ENCODE measurements at regions of chr10 and their contacts with region 1.

Region 1: GRCh38 chr10:31864834-31865518 is 63.7 kb downstream of the ARHGAP12 start:
- DNase-seq: no peak
- ATAC-seq: peak in 5 of 8 donors; percentile 16 to 54 (median 51)
- H3K4me3 ChIP-seq: peak overlapping the region in 6 of 10 donors; percentile 0 to 16 (median 12)
- H3K27ac ChIP-seq: peak overlapping the region in 6 of 10 donors; percentile 10 to 27 (median 18)
- H3K4me1 ChIP-seq: peaks cover 0 to 44% (median 20%) of the 10 kb centered on the region in 9 donors
- H3K27me3 ChIP-seq: no peaks in the 10 kb centered on the region
- CTCF ChIP-seq: no peak

Region 2: DNA sequence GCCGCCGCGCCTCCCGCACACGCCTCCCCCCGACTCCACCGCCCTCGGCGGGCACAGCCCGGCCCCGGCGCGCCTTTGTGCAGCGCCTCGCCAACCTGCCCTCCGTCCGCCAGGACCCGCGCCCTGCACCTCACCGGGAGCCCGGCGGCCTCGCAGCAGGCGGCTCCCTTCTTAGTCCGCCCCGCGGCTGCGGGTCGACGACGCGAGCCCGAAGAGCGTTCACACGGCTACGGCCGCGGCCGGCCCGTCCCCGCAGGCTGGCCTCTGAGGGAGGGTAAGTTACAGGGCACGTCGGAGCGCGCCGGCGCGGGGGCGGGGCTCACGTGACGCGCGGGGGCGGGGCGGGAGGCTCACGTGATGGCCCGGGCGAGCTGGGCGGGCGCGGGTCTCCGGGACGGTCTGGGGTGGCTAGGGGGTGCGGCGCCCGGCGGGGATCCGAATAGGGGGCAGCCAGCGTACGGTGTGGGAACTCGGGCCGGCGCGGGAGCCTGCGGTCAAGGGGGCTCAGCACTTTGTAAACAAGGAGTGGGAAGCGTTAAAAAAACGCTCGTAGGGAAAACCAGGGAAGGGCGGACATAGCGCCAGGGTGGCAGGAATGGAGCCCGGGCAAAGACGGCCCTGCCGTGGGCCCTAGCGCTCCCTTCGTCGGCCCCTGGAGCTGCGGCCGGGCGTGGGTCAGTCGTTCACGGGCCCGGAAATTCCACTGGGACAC is 63.7 kb after region 1 on chr10 and contains the start of gene ARHGAP12:
- intact Hi-C with region 1: loop called in 6 of 10 experiments (anchors 5 to 10 kb)
- DNase-seq: peak; percentile 91 to 94
- ATAC-seq: peak; percentile 95 to 98 (median 97)
- H3K4me3 ChIP-seq: peak within 1 kb of the TSS; percentile 53 to 96 (median 89)
- H3K27ac ChIP-seq: peak within 1 kb of the TSS; percentile 90 to 98 (median 97)
- H3K4me1 ChIP-seq: peaks cover 6 to 42% (median 25%) of the 10 kb centered on the region in 9 donors
- H3K27me3 ChIP-seq: no peaks in the 10 kb centered on the region
- CTCF ChIP-seq: no peak
- total RNA-seq, gene ARHGAP12: 16.7 to 25.6 (median 21.0) TPM

Region 3: DNA sequence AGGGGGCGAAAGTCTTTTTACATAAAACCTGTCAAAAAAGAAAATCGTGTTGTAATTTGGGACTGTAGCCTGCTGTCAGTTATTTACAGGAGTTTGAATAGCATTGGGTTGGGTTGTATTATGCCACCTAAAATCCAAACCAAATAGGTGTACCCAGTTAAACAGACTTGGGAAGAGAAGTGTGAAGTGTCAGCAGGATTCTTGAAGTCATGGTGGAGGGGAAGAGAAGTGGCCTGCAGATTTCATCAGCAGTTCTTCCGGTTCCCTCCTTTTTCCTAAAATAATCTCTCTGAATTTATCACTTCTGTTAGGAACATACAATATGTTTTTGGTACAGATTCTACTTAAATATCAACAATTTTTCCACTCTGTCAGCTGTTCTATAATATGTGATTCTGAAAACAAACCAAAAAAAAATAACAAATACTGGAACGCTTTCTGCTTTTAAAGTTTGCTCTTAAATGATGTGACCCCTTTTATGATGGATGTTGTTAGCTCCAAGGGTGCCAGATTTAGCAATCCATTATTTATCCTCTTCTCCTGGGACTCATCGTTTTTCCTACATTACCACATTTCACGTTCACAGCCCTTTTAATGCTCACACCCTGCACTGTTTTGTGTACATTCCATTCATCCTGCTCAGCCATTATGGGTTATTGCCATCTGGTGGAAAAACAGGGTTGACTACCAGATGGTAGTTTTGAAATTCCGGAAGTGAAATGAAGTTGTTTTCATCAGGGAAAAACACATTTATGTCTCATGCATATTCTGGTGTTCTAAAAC is 82.4 kb after region 1 on chr10:
- intact Hi-C with region 1: loop called in 7 of 10 experiments (anchors 2 to 10 kb)
- DNase-seq: peak in 1 of 2 donors; percentile 22
- ATAC-seq: peak in 7 of 8 donors; percentile 58 to 91 (median 81)
- H3K4me3 ChIP-seq: peak overlapping the region in 2 of 10 donors; percentile 2 to 9
- H3K27ac ChIP-seq: peak overlapping the region in 3 of 10 donors; percentile 9 to 35 (median 34)
- H3K4me1 ChIP-seq: peaks cover 0 to 33% (median 3%) of the 10 kb centered on the region in 9 donors
- H3K27me3 ChIP-seq: no peaks in the 10 kb centered on the region
- CTCF ChIP-seq: peak in 8 of 9 donors; percentile 36 to 66 (median 50)

Region 4: DNA sequence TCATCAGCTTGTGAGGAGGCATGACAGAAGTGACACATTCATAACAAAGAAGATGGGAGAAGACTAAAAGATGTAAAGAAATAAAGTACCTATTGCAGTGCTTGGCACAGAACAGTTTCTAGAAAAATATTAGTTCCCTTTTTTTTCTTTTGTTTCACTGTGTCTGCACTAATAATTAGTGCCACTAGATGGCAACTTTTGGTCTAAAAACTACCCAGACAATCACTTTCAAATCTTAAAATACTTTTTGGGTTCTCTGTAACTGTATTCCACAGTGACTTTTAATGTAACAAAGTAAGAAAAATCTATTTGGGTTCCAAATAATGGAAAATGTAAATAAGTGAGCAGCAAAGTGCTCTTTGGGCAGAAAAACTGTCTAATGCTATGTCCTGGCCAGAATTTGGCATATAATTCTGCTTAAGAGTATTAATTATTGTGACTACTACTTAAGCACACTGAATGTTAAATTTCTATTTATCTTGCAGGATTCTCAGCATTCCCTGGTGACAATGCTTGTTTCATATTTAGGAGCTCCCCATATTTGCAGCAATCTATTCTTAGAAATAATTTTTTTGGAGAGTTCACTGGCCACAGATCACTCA is 326.0 kb after region 1 on chr10:
- intact Hi-C with region 1: loop called in 2 of 10 experiments (anchors 10 kb)
- DNase-seq: no peak
- ATAC-seq: peak in 2 of 8 donors; percentile 31 to 34
- H3K4me3 ChIP-seq: no peak overlapping the region
- H3K27ac ChIP-seq: no peak overlapping the region
- H3K4me1 ChIP-seq: peaks cover 0 to 11% (median 0%) of the 10 kb centered on the region in 9 donors
- H3K27me3 ChIP-seq: no peaks in the 10 kb centered on the region
- CTCF ChIP-seq: peak; percentile 56 to 84 (median 75)

Region 5: GRCh38 chr10:32217216-32217615 is 352.2 kb after region 1 on chr10:
- intact Hi-C with region 1: loop called in 2 of 10 experiments (anchors 5 kb)
- DNase-seq: no peak
- ATAC-seq: no peak
- H3K4me3 ChIP-seq: no peak overlapping the region
- H3K27ac ChIP-seq: no peak overlapping the region
- H3K4me1 ChIP-seq: no peaks in the 10 kb centered on the region
- H3K27me3 ChIP-seq: peaks cover 0 to 10% (median 0%) of the 10 kb centered on the region in 7 donors
- CTCF ChIP-seq: no peak

Region 6: DNA sequence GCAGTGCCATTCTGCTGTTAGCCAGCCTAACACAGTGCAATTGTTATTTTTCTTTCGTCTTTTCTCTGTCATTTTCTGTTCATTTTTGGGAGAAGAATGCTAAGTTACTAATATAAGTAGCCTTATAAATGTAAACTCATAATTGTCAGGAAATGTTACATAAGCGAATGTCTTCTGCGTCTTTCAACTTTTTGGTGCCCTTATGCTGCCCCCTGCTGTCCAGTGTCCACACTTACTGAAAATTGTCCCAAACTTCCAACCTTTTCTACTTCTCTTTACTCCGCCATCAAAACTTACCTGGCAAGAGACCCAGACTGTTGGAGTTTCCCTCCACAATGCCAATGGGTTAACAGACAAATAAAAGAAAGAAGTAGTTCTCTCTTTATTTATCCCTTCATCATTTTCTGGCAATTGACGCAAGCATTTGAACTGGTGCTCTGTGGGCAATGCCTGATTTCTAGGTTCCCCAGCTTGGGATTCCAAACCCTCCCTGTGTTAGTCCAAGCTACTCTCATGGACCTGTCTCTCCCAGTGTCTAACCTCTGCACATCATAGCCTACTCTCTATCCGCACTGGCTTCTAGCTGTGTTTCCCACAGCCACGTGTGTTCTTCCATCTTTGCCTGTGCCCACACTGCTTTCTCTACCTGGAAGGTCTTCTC is 502.9 kb after region 1 on chr10:
- intact Hi-C with region 1: no loop called
- DNase-seq: peak; percentile 44 to 84
- ATAC-seq: peak in 7 of 8 donors; percentile 28 to 63 (median 50)
- H3K4me3 ChIP-seq: peak overlapping the region in 4 of 10 donors; percentile 11 to 34 (median 26)
- H3K27ac ChIP-seq: peak overlapping the region in 6 of 10 donors; percentile 0 to 38 (median 32)
- H3K4me1 ChIP-seq: peaks cover 0 to 66% (median 33%) of the 10 kb centered on the region in 9 donors
- H3K27me3 ChIP-seq: no peaks in the 10 kb centered on the region
- CTCF ChIP-seq: peak; percentile 61 to 91 (median 84)